Activated naive CD4-positive, alpha-beta T cell treated with anti-CD3 and anti-CD28 coated beads for 36 hours (primary cell): ENCODE measurements at regions of chr18 and their contacts with region 1.

Region 1: DNA sequence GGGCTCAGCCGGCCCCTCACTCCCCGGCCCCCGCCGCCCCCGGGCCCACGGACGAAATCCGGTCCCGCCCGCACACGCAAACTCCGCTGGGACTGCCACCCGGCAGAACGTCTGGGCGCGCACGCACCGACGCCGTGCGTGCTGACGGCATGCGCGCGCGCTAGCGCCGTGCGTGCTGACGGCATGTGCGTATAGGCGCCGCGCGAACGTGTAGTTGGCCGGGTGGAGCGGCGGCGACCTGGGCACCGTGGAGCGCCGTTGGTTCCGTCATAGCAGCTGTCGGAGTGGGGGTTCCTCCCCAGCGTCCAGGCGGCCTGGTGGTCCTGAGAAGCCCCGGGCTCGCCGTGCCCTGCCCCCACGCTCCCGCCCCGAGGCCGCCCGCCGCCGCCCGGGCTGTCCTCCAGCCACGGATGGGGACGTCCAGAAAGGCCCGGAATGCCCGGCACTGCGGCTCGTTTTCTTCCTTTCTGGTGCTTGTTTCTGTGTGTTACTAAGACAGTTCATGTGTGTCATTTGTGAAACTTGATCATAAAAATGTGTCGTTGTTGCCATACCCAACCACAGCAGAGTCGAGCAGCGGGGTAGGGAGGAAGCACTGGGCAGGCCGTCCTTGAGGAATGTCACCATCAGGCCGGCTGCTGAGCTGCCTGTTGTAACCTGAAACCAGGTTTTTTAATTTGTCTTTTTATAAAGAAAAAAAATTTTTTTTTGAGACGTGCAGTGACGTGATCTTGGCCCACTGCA is at the start of gene TXNL4A:
- DNase-seq: peak; percentile 84
- H3K4me3 Mint-ChIP-seq: peak within 1 kb of the TSS; percentile 85
- H3K27ac Mint-ChIP-seq: peak within 1 kb of the TSS; percentile 85
- H3K4me1 Mint-ChIP-seq: peaks cover 35% of the 10 kb centered on the region
- H3K27me3 Mint-ChIP-seq: no peaks in the 10 kb centered on the region
- total RNA-seq, gene TXNL4A: 185 to 186 TPM

Region 2: DNA sequence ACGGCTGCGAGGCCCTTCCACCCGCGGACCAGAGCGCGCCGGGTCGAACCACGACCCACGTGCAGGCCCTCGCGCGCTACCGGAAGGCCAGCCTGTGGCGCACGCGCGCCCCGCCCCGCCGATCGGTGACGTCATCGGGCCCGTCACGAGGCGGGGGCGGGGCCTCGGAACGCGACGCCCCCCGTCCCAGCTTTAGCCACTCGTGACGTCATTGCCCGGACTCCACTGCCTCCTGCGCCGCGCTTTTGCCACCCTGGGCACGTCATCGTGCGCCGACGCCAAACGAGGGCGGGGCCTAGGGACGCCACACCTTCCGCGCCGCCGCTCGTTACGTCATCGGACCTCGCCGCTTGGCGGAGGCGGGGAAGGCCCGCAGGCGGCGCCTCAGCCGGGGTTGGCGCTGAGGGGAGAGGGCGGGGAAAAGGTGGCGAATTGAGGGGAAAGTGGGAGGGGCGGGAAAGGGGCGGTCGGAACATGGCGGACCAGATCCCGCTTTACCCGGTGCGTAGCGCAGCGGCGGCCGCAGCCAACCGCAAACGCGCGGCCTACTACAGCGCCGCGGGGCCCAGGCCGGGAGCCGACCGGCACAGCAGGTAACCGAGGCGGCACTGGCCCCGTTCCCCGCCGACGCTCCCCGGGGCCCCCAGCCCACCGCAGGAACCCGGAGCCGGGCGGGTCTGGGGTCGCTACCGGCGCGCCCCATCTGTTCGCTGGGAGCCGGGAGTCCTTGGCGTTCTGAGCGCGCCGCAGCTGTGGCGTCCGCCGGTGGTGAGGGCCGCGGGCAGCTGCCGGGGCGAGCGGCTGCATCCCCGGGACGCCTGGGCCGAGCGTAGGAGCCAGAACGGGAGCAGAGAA is 919.5 kb before region 1 on chr18 and contains the start of gene ATP9B:
- CTCF ChIA-PET with region 1: no interaction called
- intact Hi-C with region 1: loop called (anchors 1 kb)
- DNase-seq: peak; percentile 98
- H3K4me3 Mint-ChIP-seq: peak within 1 kb of the TSS; percentile 91
- H3K27ac Mint-ChIP-seq: peak within 1 kb of the TSS; percentile 97
- H3K4me1 Mint-ChIP-seq: peaks cover 33% of the 10 kb centered on the region
- H3K27me3 Mint-ChIP-seq: peaks cover 3% of the 10 kb centered on the region
- total RNA-seq, gene ATP9B: 18.6 to 19.1 TPM

Region 3: DNA sequence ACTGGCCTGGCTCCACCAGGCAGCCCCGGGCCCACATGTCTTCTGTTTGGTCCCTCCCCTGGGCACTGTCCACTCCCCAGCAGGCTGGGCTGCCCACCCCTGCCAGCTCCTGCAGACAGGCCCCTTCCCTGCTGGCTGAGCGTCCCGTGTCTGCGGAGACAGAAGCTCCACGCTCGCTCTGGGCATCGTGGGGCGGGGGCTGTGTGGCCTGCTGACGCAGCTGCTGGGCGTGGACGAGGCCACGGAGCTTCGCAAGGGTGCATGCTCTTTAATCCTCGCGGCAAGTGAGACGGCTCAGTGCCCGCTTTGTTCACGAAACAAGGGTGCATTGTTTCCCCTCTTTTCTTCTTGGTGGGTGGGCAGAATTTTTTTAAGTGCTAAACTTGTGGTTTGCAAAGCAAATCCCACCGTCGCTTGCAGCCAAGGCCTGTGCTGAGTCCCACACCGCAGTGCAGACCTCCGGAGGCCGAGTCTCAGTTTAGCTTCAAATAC is 441.8 kb before region 1 on chr18:
- CTCF ChIA-PET with region 1: no interaction called
- intact Hi-C with region 1: no loop called
- DNase-seq: no peak
- H3K4me3 Mint-ChIP-seq: no peak overlapping the region
- H3K27ac Mint-ChIP-seq: no peak overlapping the region
- H3K4me1 Mint-ChIP-seq: no peaks in the 10 kb centered on the region
- H3K27me3 Mint-ChIP-seq: no peaks in the 10 kb centered on the region

Region 4: GRCh38 chr18:79797518-79798345 is 190.9 kb before region 1 on chr18 and contains the start of gene KCNG2:
- CTCF ChIA-PET with region 1: no interaction called
- intact Hi-C with region 1: loop called (anchors 2 kb)
- DNase-seq: peak; percentile 51
- H3K4me3 Mint-ChIP-seq: peak within 1 kb of the TSS; percentile 43
- H3K27ac Mint-ChIP-seq: no peak within 1 kb of the TSS
- H3K4me1 Mint-ChIP-seq: peaks cover 10% of the 10 kb centered on the region
- H3K27me3 Mint-ChIP-seq: peaks cover 38% of the 10 kb centered on the region
- total RNA-seq, gene KCNG2: not detected

Region 5: GRCh38 chr18:79964330-79965118 is 24.1 kb before region 1 on chr18 and contains the start of gene HSBP1L1:
- CTCF ChIA-PET with region 1: interaction called, 5 read pairs
- intact Hi-C with region 1: loop called (anchors 1 kb)
- DNase-seq: peak; percentile 78
- H3K4me3 Mint-ChIP-seq: peak within 1 kb of the TSS; percentile 71
- H3K27ac Mint-ChIP-seq: peak within 1 kb of the TSS; percentile 80
- H3K4me1 Mint-ChIP-seq: peaks cover 23% of the 10 kb centered on the region
- H3K27me3 Mint-ChIP-seq: no peaks in the 10 kb centered on the region
- total RNA-seq, gene HSBP1L1: 14.2 to 14.8 TPM

Region 6: DNA sequence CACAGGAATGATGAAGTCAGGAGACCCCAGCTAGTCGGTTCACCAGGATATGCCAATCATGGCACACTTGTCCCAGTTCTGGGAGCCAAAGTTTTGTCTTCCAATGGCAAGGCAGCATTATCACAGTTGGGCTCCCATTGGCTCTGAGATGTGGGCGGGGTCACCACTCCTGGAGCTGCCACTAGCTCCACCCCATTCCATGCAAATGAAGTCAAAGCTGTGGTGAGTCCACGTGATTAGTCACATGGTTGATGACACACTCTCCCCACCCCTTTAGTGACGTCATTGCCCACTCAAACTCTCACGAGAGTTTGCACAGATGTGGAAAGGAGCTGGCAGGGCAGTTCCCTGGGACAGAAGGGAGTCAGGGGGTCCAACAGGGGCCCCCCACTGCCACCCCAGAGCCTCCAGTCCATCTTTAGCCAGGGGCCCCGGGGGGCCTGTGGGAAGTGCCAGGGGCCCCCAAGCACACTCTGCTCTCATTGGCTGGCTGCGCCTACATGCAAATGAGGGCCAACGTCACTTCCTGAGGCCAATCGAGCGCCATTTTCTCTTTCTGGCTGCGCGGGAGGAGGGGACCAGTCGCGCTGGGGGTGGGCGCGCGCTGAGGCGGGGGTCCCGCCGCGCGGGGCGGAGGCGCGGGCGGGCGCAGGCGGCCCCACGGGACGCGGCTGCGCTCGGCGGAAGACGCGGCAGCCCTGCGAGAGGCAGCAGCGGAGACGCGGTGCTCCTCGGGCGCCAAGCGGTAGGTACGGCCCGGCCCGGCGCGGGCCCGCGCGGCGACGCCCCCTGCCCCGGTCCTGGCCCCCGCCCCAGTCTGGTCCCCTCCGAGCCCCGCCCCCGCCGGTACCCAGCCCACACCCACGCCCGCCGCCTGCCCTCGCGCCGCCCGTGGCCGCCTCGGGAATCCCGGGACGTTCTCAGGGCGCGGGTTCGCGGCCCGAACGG is 120.4 kb after region 1 on chr18 and contains the start of gene ADNP2:
- CTCF ChIA-PET with region 1: interaction called, 3 read pairs
- intact Hi-C with region 1: loop called (anchors 1 kb)
- DNase-seq: peak; percentile 92
- H3K4me3 Mint-ChIP-seq: peak within 1 kb of the TSS; percentile 79
- H3K27ac Mint-ChIP-seq: peak within 1 kb of the TSS; percentile 80
- H3K4me1 Mint-ChIP-seq: peaks cover 32% of the 10 kb centered on the region
- H3K27me3 Mint-ChIP-seq: no peaks in the 10 kb centered on the region
- total RNA-seq, gene ADNP2: 16.8 to 18.0 TPM